Esophagus muscularis mucosa (tissue), 4 donors: ENCODE measurements at regions of chr19 and their contacts with region 1.

Region 1: GRCh38 chr19:10580979-10581631 is 6.0 kb downstream of the AP1M2 start:
- DNase-seq: peak; percentile 98
- H3K4me3 ChIP-seq: peak overlapping the region; percentile 22 to 33 (median 28)
- H3K27ac ChIP-seq: no peak overlapping the region
- H3K4me1 ChIP-seq: peaks cover 5 to 11% (median 7%) of the 10 kb centered on the region in 4 donors
- H3K27me3 ChIP-seq: peaks cover 0 to 13% (median 0%) of the 10 kb centered on the region in 4 donors
- CTCF ChIP-seq: peak; percentile 97 to 99 (median 98)
- EP300 ChIP-seq: no peak
- POLR2A ChIP-seq: no peak

Region 2: DNA sequence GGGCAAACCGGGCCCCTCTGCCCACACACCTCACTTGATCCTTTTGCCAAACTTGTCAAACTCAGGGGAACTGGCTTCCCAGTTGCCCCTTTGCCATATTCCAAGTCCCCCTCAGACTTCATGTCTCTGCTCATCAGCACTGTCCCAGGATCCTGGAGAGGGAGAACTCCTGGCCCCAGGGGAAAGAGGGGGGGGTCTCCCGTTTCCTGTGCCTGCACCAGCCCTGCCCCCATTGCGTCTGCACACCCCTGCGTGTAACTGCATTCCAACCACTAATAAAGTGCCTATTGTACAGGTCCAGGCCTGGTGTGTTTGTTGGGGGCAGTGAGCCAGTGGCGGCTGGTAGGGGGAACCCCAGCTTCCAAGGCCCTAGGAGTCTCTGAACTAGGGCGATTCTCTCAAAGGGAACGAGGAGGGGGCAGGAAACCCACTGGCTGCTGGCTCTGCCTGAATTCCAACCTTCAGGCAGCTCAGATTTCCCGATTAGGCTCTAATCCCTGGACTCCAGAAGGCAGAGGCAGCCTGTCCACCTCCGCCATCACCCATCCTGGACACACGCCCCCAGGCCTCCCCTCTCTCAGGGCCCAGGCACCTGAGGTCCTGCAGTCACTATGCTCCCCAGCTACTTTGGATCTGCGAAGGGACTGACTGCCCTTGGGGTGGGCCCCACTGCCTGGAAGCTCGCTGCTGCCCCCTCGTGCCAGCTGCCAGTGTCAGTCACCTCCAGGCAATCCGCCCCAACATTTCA is 63.3 kb after region 1 on chr19:
- intact Hi-C with region 1: loop called (anchors 1 kb)
- DNase-seq: no peak
- H3K4me3 ChIP-seq: no peak overlapping the region
- H3K27ac ChIP-seq: peak overlapping the region; percentile 58 to 71 (median 60)
- H3K4me1 ChIP-seq: peaks cover 15 to 36% (median 23%) of the 10 kb centered on the region in 4 donors
- H3K27me3 ChIP-seq: no peaks in the 10 kb centered on the region
- CTCF ChIP-seq: peak; percentile 80 to 95 (median 84)
- EP300 ChIP-seq: no peak
- POLR2A ChIP-seq: no peak

Region 3: GRCh38 chr19:10699650-10700335 is 118.7 kb after region 1 on chr19:
- intact Hi-C with region 1: loop called (anchors 10 kb)
- DNase-seq: no peak
- H3K4me3 ChIP-seq: no peak overlapping the region
- H3K27ac ChIP-seq: no peak overlapping the region
- H3K4me1 ChIP-seq: peaks cover 21 to 42% (median 32%) of the 10 kb centered on the region in 4 donors
- H3K27me3 ChIP-seq: peaks cover 0 to 5% (median 0%) of the 10 kb centered on the region in 4 donors
- CTCF ChIP-seq: peak; percentile 30 to 52 (median 33)
- EP300 ChIP-seq: no peak
- POLR2A ChIP-seq: no peak